ENCODE measurements at regions of chr4 and their contacts with region 1.

Region 1: DNA sequence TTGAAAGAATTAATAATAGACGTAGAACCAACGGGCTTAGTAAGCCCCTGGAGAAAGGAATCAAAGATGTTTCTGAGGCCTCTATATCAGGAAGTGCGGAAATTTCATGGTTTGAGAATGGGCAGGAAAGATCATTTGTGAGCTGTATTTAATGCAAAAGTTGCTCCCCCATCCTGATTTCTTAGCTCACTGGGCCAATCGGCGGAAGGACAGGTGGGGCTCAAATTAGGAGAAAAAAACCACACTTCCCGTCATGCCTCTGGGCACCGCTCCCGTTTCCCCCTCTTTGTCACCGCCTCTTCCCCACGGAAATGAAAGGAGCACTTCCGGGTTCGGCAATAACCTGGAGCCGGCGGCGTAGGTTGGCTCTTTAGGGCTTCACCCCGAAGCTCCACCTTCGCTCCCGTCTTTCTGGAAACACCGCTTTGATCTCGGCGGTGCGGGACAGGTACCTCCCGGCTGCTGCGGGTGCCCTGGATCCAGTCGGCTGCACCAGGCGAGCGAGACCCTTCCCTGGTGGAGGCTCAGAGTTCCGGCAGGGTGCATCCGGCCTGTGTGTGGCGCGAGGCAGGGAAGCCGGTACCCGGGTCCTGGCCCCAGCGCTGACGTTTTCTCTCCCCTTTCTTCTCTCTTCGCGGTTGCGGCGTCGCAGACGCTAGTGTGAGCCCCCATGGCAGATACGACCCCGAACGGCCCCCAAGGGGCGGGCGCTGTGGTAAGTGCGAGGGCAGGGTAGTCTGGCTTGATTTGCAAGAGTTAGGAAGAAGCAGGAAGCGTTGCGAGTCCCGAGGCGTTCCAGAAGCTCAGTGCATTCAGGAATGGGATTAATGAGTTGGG is at the start of gene TMEM33:
- DNase-seq: peak; percentile 87 to 94 (median 88)
- ATAC-seq: peak; percentile 92
- H3K4me3 ChIP-seq: peak within 1 kb of the TSS; percentile 73
- H3K27ac ChIP-seq: peak within 1 kb of the TSS; percentile 89
- H3K4me1 ChIP-seq: peaks cover 5 to 6% of the 10 kb centered on the region in 2 experiments; a peak in 3 of 5 replicates
- H3K27me3 ChIP-seq: peaks cover 0 to 4% of the 10 kb centered on the region in 2 experiments; a peak in 2 of 5 replicates
- CTCF ChIP-seq: peak in 1 of 3 experiments; percentile 15; a peak in 1 of 6 replicates
- EP300 ChIP-seq: no peak
- POLR2A ChIP-seq: peak; percentile 93
- RAD21 ChIP-seq: no peak
- polyA plus RNA-seq, gene TMEM33: 16.8 to 35.7 TPM

Region 2: DNA sequence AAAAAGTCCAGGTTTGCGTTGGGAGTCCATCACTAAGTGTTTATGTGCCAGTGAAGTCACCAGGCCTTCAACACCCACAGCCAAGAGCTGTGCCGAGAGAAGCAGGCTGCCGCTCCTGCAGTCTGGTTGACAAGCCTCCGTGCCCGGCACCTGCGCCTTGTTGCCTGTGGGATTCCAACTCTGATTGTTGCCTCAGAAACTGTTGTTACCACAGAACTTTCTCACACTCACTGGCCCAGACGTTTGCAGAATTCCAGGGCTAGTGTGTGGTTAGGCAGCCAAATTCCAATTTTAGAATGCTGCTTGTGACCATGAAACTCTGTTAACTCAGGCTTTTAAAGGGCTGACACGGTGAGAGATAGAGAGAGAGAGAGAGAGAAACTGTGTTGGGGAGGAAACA is 516.6 kb before region 1 on chr4:
- CTCF ChIA-PET with region 1: no interaction called
- POLR2A ChIA-PET with region 1: no interaction called
- in situ Hi-C with region 1: no loop called
- intact Hi-C with region 1: no loop called
- DNase-seq: no peak
- ATAC-seq: no peak
- H3K4me3 ChIP-seq: no peak overlapping the region
- H3K27ac ChIP-seq: no peak overlapping the region
- H3K4me1 ChIP-seq: no peaks in the 10 kb centered on the region
- H3K27me3 ChIP-seq: 0 out of 5 replicates have a peak, but pooled peaks cover 0 to 5% of the 10 kb centered on the region in 2 experiments
- CTCF ChIP-seq: no peak
- EP300 ChIP-seq: no peak
- POLR2A ChIP-seq: no peak
- RAD21 ChIP-seq: no peak

Region 3: DNA sequence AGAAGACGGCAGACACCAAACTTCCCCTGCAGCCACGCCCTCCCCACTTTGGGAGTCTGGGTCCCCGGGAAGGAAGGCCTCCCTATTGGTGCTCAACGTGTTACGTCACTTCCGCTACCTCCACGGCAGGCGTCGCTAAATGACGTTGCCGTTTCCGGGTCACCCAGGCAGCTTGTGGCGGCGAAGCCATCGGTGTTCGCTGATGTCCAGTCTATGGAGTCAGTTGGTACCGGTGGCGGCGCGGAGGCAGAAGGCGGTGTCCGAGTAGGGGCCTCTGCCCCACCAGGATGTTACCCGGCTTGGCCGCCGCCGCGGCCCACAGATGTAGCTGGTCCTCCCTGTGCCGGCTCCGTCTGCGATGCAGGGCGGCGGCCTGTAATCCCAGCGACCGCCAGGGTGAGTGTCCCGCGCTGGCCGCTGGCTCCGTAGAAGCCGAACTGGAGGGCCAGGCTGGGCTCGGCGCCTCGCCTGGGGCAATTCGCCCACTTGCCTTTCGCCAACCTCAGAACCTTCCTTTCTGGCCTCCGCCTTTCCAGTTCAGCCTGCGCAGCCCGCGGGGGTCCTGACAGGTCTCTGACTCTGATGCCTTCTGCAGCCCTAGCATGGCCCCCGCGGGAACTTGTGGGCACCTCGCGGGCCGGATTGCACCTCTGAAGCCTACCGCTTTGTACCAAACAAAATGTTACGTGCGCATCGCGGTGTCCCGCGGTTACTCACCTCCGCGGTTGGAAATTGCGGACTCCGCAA is 55.5 kb after region 1 on chr4 and contains the start of gene SLC30A9:
- CTCF ChIA-PET with region 1: no interaction called
- POLR2A ChIA-PET with region 1: no interaction called
- in situ Hi-C with region 1: no loop called
- intact Hi-C with region 1: loop called (anchors 5 kb)
- DNase-seq: peak; percentile 94 to 98 (median 96)
- ATAC-seq: peak; percentile 92
- H3K4me3 ChIP-seq: peak within 1 kb of the TSS; percentile 92
- H3K27ac ChIP-seq: peak within 1 kb of the TSS; percentile 87
- H3K4me1 ChIP-seq: peaks cover 8 to 9% of the 10 kb centered on the region in 2 experiments; a peak in 4 of 5 replicates
- H3K27me3 ChIP-seq: no peaks in the 10 kb centered on the region
- CTCF ChIP-seq: peak; percentile 24 to 44 (median 32); a peak in 3 of 6 replicates
- EP300 ChIP-seq: no peak
- POLR2A ChIP-seq: peak; percentile 94
- RAD21 ChIP-seq: no peak
- polyA plus RNA-seq, gene SLC30A9: 14.7 to 16.6 TPM